ENCODE measurements at regions of chr3 and their contacts with region 1.

Region 1: GRCh38 chr3:44976002-44976815 is at the starts of genes EXOSC7 and ZDHHC3:
- DNase-seq: peak; percentile 87
- ATAC-seq: peak; percentile 91 to 95 (median 94)
- H3K4me3 ChIP-seq: peak within 1 kb of the TSS; percentile 59 to 99 (median 90)
- H3K27ac ChIP-seq: peak within 1 kb of the TSS; percentile 27 to 95 (median 88)
- H3K4me1 ChIP-seq: peaks cover 5 to 56% (median 33%) of the 10 kb centered on the region in 9 donors
- H3K27me3 ChIP-seq: no peaks in the 10 kb centered on the region
- CTCF ChIP-seq: peak in 1 of 9 donors; percentile 19
- total RNA-seq, gene EXOSC7: 24.2 to 35.4 (median 31.5) TPM
- total RNA-seq, gene ZDHHC3: 35.0 to 52.2 (median 43.1) TPM

Region 2: GRCh38 chr3:45011756-45012508 is 35.7 kb after region 1 on chr3:
- intact Hi-C with region 1: loop called in 1 of 10 experiments (anchors 5 kb)
- DNase-seq: peak; percentile 64 to 79
- ATAC-seq: peak; percentile 77 to 94 (median 86)
- H3K4me3 ChIP-seq: peak overlapping the region in 2 of 10 donors; percentile 3 to 17
- H3K27ac ChIP-seq: peak overlapping the region; percentile 67 to 91 (median 84)
- H3K4me1 ChIP-seq: peaks cover 11 to 61% (median 33%) of the 10 kb centered on the region in 9 donors
- H3K27me3 ChIP-seq: no peaks in the 10 kb centered on the region
- CTCF ChIP-seq: no peak

Region 3: DNA sequence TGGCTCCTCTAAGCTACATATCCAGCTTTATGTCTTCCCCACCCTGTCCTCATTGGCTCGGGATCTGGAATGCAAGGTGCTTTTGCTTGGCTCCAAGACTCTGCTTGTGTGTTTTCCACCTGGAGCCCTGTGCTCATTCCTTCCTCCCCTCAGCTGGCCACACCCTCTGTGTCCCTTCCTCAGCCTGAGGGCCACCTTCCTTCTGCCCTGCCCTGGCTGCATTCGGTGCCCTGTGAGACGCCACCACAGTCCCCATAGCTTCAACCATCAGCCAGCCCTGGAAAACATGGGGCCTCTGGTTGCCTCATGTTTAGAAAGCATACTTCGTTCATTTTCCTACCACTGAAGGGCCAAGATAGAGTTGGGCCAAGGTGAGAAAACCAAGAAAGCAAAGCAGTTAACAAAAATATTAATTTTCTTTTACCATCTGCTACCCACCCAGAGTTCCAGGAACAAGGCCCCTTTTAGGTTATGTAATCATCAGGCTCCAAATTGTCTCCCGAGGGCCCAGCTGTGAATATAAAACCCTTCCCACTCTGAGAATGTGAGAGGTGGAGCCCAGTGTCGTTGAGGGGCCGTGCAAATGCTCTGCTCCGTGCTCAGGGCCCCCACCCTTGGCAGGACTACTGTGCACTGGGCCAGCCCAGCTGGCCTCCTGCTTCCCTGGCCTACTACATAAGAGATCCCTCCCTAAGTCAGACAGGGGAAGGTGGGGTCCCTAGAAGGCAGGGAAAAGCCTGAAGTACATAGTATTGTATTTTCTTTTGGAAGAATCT is 45.1 kb after region 1 on chr3:
- intact Hi-C with region 1: loop called in 1 of 10 experiments (anchors 5 kb)
- DNase-seq: peak; percentile 68 to 73
- ATAC-seq: peak; percentile 71 to 89 (median 82)
- H3K4me3 ChIP-seq: no peak overlapping the region
- H3K27ac ChIP-seq: peak overlapping the region in 8 of 10 donors; percentile 40 to 76 (median 68)
- H3K4me1 ChIP-seq: peaks cover 11 to 83% (median 41%) of the 10 kb centered on the region in 9 donors
- H3K27me3 ChIP-seq: no peaks in the 10 kb centered on the region
- CTCF ChIP-seq: no peak

Region 4: DNA sequence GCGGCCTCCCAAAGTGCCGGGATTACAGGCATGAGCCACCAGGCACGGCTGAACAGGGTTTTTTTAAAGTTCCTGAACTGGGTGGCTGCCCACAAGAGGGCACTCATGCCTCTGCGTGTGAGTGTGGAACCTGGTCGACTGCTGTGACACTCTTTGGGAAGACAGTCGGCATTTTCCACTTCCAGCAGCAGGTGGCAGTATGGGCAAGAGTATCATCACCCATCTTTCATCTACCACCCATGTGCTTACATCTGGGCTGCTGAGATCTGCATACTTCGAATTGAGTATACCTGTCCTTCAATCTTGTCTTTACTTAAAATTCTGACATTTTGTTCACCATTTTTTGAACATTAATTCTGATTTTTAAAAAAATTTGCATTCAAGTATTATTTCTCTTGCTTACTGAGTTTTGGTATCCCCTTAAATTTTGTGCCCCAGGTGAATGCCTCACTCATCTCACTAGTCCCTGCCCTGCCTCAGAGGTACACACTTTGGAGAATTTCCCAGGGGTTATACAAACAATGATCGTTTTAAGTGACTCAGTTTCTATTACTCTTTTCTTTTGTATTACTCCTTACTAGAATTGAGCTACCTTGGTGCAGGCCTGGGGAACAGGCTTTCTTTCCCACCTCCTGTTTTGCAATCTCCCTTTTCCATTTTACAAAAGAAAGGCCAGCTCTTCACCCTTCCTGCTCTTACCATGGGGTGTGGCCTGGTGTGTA is 61.7 kb after region 1 on chr3:
- intact Hi-C with region 1: loop called in 3 of 10 experiments (anchors 5 to 10 kb)
- DNase-seq: peak; percentile 86 to 93
- ATAC-seq: peak; percentile 63 to 86 (median 82)
- H3K4me3 ChIP-seq: peak overlapping the region in 2 of 10 donors; percentile 24 to 26
- H3K27ac ChIP-seq: peak overlapping the region in 5 of 10 donors; percentile 25 to 62 (median 32)
- H3K4me1 ChIP-seq: peaks cover 3 to 62% (median 33%) of the 10 kb centered on the region in 9 donors
- H3K27me3 ChIP-seq: no peaks in the 10 kb centered on the region
- CTCF ChIP-seq: peak; percentile 80 to 94 (median 89)

Measured in heart right ventricle (tissue), 16 donors.